H1 (cell line): ENCODE measurements at regions of chr19 and their contacts with region 1.

Region 1: DNA sequence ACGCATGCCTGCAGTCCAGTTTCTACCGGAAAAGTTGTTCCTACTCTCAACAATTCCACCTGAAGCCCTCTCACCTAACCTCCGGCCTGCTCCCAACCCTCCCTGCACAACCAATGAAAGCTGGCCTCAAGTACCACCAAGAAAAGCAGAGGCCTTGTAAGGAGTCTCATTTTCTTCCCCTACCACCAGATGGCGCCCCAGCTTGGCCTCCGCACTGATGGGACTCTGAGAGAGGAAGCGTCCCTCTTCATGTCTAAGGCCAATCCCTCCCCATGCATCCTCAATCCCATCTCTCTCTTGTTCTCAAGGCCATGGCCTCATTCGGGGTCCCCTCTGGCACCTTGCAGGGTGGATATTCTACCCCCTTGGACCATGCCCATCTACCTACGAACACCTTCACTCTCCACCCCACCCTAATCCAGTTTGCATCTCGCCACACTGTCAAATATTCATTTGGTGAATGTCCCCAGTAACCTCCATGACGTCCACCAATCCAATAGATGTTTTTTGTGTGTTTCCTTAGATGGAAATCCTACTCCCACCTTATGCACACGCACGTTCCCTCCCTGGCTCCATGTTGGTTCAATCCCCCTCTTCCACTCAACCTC is 412.8 kb downstream of the ZNF536 start:
- DNase-seq: peak; percentile 13 to 89
- H3K4me3 ChIP-seq: no peak overlapping the region
- H3K27ac ChIP-seq: no peak overlapping the region
- H3K4me1 ChIP-seq: no peaks in the 10 kb centered on the region
- H3K27me3 ChIP-seq: no peaks in the 10 kb centered on the region
- CTCF ChIP-seq: peak; percentile 77 to 94 (median 83)
- EP300 ChIP-seq: no peak
- POLR2A ChIP-seq: no peak
- RAD21 ChIP-seq: peak; percentile 87 to 88

Region 2: DNA sequence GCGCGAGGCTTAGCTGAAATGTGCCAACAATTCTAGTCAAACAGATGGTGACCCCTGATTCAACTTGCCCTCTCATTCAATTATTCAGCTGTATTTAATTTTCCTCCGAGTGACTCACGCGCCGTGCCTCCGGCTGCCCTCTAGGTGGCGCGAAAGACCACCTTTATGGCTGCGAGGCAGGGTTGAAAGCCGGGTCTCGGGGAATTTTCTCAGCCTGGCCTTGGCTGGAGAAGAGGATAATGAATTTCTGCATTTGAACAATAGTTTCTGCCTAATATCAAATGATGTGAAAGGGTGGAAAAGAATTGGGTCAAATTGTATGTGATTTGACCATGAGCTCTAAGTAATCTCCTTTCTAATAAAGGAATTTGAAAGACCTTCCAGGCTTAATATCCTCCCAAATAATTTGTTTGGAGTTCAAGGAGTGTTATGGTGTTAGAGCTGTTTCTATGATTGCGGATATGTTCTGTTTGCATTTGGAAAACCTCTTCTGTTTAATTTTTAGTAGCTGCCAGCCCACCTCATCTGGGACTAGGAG is 101.9 kb before region 1 on chr19:
- CTCF ChIA-PET with region 1: interaction called, 18 read pairs
- POLR2A ChIA-PET with region 1: no interaction called
- DNase-seq: peak in 1 of 2 experiments; percentile 82
- H3K4me3 ChIP-seq: no peak overlapping the region
- H3K27ac ChIP-seq: no peak overlapping the region
- H3K4me1 ChIP-seq: peaks cover 0 to 3% (median 0%) of the 10 kb centered on the region in 4 experiments; a peak in 2 of 7 replicates
- H3K27me3 ChIP-seq: no peaks in the 10 kb centered on the region
- CTCF ChIP-seq: peak; percentile 79 to 88 (median 86)
- EP300 ChIP-seq: no peak
- POLR2A ChIP-seq: no peak
- RAD21 ChIP-seq: peak; percentile 92 to 94

Region 3: GRCh38 chr19:30731591-30731990 is 53.4 kb before region 1 on chr19:
- CTCF ChIA-PET with region 1: no interaction called
- POLR2A ChIA-PET with region 1: no interaction called
- DNase-seq: no peak
- H3K4me3 ChIP-seq: no peak overlapping the region
- H3K27ac ChIP-seq: no peak overlapping the region
- H3K4me1 ChIP-seq: no peaks in the 10 kb centered on the region; a peak in 1 of 7 replicates
- H3K27me3 ChIP-seq: no peaks in the 10 kb centered on the region
- CTCF ChIP-seq: no peak
- EP300 ChIP-seq: no peak
- POLR2A ChIP-seq: no peak
- RAD21 ChIP-seq: no peak

Region 4: GRCh38 chr19:30799865-30800755 is 15.2 kb after region 1 on chr19:
- CTCF ChIA-PET with region 1: interaction called, 60 read pairs
- POLR2A ChIA-PET with region 1: interaction called, 3 read pairs
- DNase-seq: peak; percentile 27 to 90
- H3K4me3 ChIP-seq: no peak overlapping the region
- H3K27ac ChIP-seq: no peak overlapping the region
- H3K4me1 ChIP-seq: peaks cover 2 to 12% (median 6%) of the 10 kb centered on the region in 4 experiments; a peak in 6 of 7 replicates
- H3K27me3 ChIP-seq: peaks cover 0 to 6% (median 1%) of the 10 kb centered on the region in 4 experiments; a peak in 2 of 7 replicates
- CTCF ChIP-seq: peak; percentile 77 to 93 (median 93)
- EP300 ChIP-seq: no peak
- POLR2A ChIP-seq: no peak
- RAD21 ChIP-seq: peak; percentile 71 to 75

Region 5: GRCh38 chr19:30807278-30807677 is 22.3 kb after region 1 on chr19:
- CTCF ChIA-PET with region 1: interaction called, 11 read pairs
- POLR2A ChIA-PET with region 1: interaction called, 3 read pairs
- DNase-seq: no peak
- H3K4me3 ChIP-seq: no peak overlapping the region
- H3K27ac ChIP-seq: no peak overlapping the region
- H3K4me1 ChIP-seq: peaks cover 2 to 17% (median 7%) of the 10 kb centered on the region in 4 experiments
- H3K27me3 ChIP-seq: no peaks in the 10 kb centered on the region
- CTCF ChIP-seq: no peak
- EP300 ChIP-seq: no peak
- POLR2A ChIP-seq: no peak
- RAD21 ChIP-seq: no peak